ENCODE measurements at regions of chr4 and their contacts with region 1.

Region 1: GRCh38 chr4:15318621-15319348 is 109.0 kb upstream of the C1QTNF7 start:
- DNase-seq: no peak
- H3K4me3 ChIP-seq: no peak overlapping the region
- H3K27ac ChIP-seq: no peak overlapping the region
- H3K4me1 ChIP-seq: no peaks in the 10 kb centered on the region
- H3K27me3 ChIP-seq: no peaks in the 10 kb centered on the region
- CTCF ChIP-seq: no peak

Region 2: GRCh38 chr4:15054541-15054940 is 264.2 kb before region 1 on chr4:
- CTCF ChIA-PET with region 1: no interaction called
- POLR2A ChIA-PET with region 1: interaction called, 10 read pairs
- intact Hi-C with region 1: no loop called
- DNase-seq: no peak
- H3K4me3 ChIP-seq: no peak overlapping the region
- H3K27ac ChIP-seq: no peak overlapping the region
- H3K4me1 ChIP-seq: no peaks in the 10 kb centered on the region
- H3K27me3 ChIP-seq: no peaks in the 10 kb centered on the region
- CTCF ChIP-seq: no peak